AG04450 (cell line): ENCODE measurements at regions of chr1 and their contacts with region 1.

Region 1: GRCh38 chr1:28470146-28470545 is 35.7 kb upstream of the RCC1 start:
- DNase-seq: no peak
- H3K4me3 ChIP-seq: no peak overlapping the region
- H3K27ac ChIP-seq: no peak overlapping the region
- H3K27me3 ChIP-seq: no peaks in the 10 kb centered on the region
- CTCF ChIP-seq: no peak

Region 2: DNA sequence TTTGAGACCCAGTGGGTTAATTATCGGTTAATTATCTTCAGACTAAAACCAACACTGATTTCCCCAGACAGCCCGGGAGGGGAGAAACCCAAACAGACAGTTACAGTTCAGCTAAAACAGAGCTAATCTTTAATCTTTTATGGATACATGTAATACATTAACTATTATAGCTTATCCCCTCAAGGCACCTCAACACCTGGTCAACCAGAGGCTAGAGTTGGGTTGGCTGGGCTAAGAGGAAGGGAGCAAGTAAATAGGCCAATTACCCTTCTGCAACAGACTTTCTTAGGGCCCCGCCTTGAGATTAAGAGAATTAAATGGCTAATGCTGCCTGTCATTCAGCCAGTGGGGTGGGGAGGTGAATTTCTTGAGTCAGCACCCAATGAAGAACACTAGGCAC is 148.0 kb before region 1 on chr1:
- CTCF ChIA-PET with region 1: interaction called, 10 read pairs
- POLR2A ChIA-PET with region 1: no interaction called
- DNase-seq: no peak
- H3K4me3 ChIP-seq: no peak overlapping the region
- H3K27ac ChIP-seq: no peak overlapping the region
- H3K27me3 ChIP-seq: no peaks in the 10 kb centered on the region
- CTCF ChIP-seq: no peak

Region 3: DNA sequence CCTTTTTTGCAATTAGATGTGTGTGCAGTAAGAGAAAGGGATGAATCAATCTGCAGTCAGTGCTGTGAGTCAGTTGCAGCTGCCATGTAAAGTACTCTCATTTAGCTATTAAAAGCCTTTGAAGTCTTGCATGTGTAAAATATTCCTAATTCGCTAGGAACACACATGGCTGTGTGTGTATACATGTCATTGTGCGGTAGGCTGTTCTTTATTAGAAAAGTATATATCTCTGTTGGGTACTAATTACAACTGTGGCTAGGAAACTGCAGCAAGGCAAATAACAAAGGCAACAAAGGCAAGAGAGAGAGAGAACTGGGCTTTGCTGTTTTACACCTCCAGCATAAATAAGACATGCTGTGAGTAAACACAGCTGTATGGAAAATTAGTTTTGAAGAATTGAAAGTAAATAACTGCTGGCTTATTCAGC is 485.9 kb after region 1 on chr1:
- CTCF ChIA-PET with region 1: no interaction called
- POLR2A ChIA-PET with region 1: no interaction called
- DNase-seq: no peak
- H3K4me3 ChIP-seq: no peak overlapping the region
- H3K27ac ChIP-seq: no peak overlapping the region
- H3K27me3 ChIP-seq: no peaks in the 10 kb centered on the region
- CTCF ChIP-seq: no peak